Gastrocnemius medialis (tissue), 4 donors: ENCODE measurements at regions of chr11 and their contacts with region 1.

Region 1: DNA sequence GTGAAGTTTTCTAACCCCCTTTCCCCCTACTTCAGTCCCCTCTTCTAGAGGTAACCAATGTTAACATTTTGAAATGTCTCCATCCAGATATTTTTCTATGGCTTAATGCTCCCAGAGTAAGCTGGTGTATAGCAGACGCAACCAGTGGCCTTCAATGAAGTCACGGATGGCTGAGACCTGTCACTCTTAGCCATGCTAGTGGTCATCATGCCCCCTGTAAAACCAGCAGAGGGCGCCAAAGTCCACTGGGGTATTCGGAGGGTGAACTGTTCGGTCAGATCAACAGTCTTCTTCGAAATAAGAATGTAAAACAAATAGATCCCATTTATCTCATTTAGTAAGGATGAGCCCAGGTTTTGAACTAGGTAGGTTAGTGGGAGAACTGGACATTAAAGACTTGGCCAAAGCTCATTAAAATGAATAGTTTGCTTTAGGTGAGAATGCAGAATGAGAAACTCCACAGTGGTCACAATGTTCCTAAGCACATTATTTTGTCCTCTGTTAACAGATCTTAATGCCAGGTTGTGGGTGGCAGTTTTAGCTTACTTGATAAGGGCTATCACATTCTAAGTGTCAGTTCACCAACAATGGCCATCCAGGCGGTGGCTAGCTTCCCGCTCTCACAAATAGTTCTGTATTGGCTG is 8.6 kb upstream of the MMP8 start:
- DNase-seq: no peak
- ATAC-seq: no peak
- H3K4me3 ChIP-seq: no peak overlapping the region
- H3K27ac ChIP-seq: no peak overlapping the region
- H3K4me1 ChIP-seq: no peaks in the 10 kb centered on the region
- H3K27me3 ChIP-seq: no peaks in the 10 kb centered on the region
- CTCF ChIP-seq: peak in 1 of 5 experiments; percentile 44
- POLR2A ChIP-seq: no peak

Region 2: GRCh38 chr11:102810945-102811660 is 77.7 kb after region 1 on chr11:
- in situ Hi-C with region 1: no loop called
- intact Hi-C with region 1: no loop called
- DNase-seq: no peak
- ATAC-seq: no peak
- H3K4me3 ChIP-seq: no peak overlapping the region
- H3K27ac ChIP-seq: no peak overlapping the region
- H3K4me1 ChIP-seq: no peaks in the 10 kb centered on the region
- H3K27me3 ChIP-seq: no peaks in the 10 kb centered on the region
- CTCF ChIP-seq: no peak
- POLR2A ChIP-seq: no peak

Region 3: GRCh38 chr11:102940714-102941588 is 207.6 kb after region 1 on chr11:
- in situ Hi-C with region 1: loop called in 1 of 4 experiments (anchors 25 kb)
- intact Hi-C with region 1: no loop called
- DNase-seq: no peak
- ATAC-seq: no peak
- H3K4me3 ChIP-seq: no peak overlapping the region
- H3K27ac ChIP-seq: no peak overlapping the region
- H3K4me1 ChIP-seq: no peaks in the 10 kb centered on the region
- H3K27me3 ChIP-seq: no peaks in the 10 kb centered on the region
- CTCF ChIP-seq: peak; percentile 4 to 58 (median 39)
- POLR2A ChIP-seq: no peak

Region 4: DNA sequence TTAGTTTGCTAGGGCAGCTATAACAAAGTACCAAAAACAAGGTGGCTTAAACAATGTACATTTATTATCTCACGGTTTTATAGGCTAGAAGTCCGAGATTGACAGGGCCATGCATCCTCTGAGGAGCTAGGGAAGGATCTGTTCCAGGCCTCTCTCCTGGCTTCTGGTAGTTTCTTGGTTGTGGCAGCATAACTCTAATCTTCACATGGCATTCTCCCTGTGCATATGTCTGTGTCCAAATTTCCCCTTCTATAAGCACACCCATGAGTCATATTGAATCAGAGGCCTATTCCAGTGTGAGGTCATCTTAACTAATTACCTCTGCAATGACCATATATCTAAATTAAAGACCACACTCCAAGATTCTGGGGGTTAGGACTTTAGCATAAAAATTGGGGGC is 253.5 kb after region 1 on chr11:
- in situ Hi-C with region 1: no loop called
- intact Hi-C with region 1: no loop called
- DNase-seq: no peak
- ATAC-seq: no peak
- H3K4me3 ChIP-seq: no peak overlapping the region
- H3K27ac ChIP-seq: no peak overlapping the region
- H3K4me1 ChIP-seq: no peaks in the 10 kb centered on the region
- H3K27me3 ChIP-seq: no peaks in the 10 kb centered on the region
- CTCF ChIP-seq: no peak
- POLR2A ChIP-seq: no peak